Endothelial cell of umbilical vein (primary cell): ENCODE measurements at regions of chr2 and their contacts with region 1.

Region 1: DNA sequence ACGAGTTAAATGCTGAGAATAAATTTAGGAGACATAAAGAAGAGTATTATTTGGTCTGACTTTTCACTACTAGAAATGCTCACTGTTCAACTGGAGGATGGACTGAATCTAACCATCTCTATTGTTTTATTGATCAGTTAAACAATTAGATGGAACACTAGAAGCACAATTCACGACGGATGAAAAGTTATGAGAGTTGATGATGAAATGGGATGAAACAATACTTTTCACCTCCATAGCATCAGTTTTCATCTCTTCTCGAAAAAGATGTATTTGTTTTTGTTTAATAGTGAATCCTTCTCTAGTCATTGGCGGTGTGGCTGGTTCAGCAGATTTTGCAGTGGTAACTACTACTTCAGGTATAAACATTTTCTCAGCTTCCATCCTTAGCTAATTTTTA is 19.3 kb downstream of the TTN start:
- DNase-seq: no peak
- H3K4me3 ChIP-seq: no peak overlapping the region
- H3K27ac ChIP-seq: no peak overlapping the region
- H3K4me1 ChIP-seq: no peaks in the 10 kb centered on the region
- H3K27me3 ChIP-seq: peaks cover 0 to 4% of the 10 kb centered on the region in 2 experiments
- CTCF ChIP-seq: no peak
- POLR2A ChIP-seq: no peak

Region 2: DNA sequence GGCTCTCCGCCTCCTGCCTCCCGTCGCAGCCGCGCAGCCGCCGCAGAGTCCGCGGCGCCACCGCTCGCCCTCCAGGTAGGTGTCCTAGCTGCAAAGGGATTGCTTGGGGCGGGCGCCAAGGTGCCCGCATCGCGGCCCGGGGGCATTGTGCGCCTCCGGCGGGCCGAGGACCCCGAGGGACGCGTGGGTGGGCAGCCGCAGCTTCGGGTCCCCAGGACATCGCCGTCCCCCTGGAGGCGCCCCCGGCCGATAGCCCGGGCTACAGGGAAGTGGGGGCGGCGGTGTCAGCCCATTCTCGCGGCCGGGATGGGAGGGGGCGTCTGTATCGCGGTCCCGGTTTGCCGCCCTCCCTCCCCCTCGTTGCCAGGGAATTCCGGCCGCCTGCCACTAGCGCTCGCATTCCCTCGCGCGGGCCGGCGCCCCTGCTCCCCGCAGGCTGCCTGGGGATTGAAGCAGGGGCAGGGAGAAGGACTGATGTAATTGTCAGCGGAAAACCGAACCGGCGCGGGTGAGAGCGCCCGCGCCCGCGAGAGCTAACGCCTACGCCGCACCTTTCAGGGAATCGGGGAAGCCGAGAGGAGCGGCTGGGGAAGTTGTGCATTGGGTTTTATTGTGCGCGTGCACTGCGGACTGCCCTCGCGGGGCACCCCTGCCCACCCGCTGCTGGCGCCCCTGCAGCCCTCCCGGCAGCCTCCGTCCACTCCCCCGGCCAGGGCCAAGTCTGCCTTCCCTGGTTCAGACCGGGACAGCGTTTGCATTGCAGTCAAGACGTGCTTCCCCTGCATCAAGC is 593.1 kb before region 1 on chr2:
- CTCF ChIA-PET with region 1: no interaction called
- POLR2A ChIA-PET with region 1: no interaction called
- dilution Hi-C with region 1: no loop called
- intact Hi-C with region 1: no loop called
- DNase-seq: peak; percentile 71
- H3K4me3 ChIP-seq: peak overlapping the region; percentile 48 to 79 (median 70)
- H3K27ac ChIP-seq: no peak overlapping the region
- H3K4me1 ChIP-seq: peaks cover 8% of the 10 kb centered on the region
- H3K27me3 ChIP-seq: peaks cover 11% of the 10 kb centered on the region in 2 experiments
- CTCF ChIP-seq: no peak
- POLR2A ChIP-seq: no peak

Region 3: GRCh38 chr2:178756843-178757242 is 31.1 kb before region 1 on chr2:
- CTCF ChIA-PET with region 1: interaction called, 5 read pairs
- POLR2A ChIA-PET with region 1: no interaction called
- dilution Hi-C with region 1: no loop called
- intact Hi-C with region 1: loop called (anchors 1 kb)
- DNase-seq: no peak
- H3K4me3 ChIP-seq: no peak overlapping the region
- H3K27ac ChIP-seq: no peak overlapping the region
- H3K4me1 ChIP-seq: no peaks in the 10 kb centered on the region
- H3K27me3 ChIP-seq: peaks cover 3 to 9% of the 10 kb centered on the region in 2 experiments
- CTCF ChIP-seq: no peak
- POLR2A ChIP-seq: no peak